ENCODE measurements at regions of chrX and their contacts with region 1.

Region 1: DNA sequence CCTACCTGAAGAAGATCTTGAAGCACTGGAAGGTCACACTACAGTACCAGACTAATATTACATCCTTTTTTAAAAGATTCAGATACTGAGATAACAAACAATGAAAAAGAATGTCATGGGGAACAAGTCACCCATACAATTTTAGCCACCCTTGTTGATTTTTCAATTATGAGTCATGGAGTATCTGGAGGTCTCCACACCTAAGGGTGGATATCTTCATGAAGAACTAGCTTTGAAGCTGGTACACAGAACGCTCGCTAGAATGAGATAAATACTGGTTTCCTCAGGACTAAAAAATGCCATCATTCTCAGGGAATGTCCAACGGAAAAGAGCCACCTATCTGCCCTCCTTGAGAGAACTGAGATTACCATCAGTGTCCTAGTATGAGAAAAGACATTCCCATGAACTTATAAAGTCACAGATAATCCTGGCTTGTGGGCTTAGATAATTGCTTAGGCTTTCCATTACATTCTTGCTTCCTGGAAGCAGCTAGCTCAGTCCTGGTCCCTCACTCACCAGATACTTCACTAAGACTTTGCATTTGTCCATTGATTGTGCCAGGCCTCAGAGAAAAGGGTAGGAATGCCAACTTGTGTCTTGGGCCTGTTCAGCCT is 166.7 kb downstream of the OR13H1 start:
- DNase-seq: no peak
- H3K4me3 Mint-ChIP-seq: peak overlapping the region; percentile 67
- H3K27ac Mint-ChIP-seq: peak overlapping the region; percentile 49
- H3K4me1 Mint-ChIP-seq: peaks cover 8% of the 10 kb centered on the region
- H3K27me3 Mint-ChIP-seq: peaks cover 26% of the 10 kb centered on the region
- CTCF ChIP-seq: no peak

Region 2: DNA sequence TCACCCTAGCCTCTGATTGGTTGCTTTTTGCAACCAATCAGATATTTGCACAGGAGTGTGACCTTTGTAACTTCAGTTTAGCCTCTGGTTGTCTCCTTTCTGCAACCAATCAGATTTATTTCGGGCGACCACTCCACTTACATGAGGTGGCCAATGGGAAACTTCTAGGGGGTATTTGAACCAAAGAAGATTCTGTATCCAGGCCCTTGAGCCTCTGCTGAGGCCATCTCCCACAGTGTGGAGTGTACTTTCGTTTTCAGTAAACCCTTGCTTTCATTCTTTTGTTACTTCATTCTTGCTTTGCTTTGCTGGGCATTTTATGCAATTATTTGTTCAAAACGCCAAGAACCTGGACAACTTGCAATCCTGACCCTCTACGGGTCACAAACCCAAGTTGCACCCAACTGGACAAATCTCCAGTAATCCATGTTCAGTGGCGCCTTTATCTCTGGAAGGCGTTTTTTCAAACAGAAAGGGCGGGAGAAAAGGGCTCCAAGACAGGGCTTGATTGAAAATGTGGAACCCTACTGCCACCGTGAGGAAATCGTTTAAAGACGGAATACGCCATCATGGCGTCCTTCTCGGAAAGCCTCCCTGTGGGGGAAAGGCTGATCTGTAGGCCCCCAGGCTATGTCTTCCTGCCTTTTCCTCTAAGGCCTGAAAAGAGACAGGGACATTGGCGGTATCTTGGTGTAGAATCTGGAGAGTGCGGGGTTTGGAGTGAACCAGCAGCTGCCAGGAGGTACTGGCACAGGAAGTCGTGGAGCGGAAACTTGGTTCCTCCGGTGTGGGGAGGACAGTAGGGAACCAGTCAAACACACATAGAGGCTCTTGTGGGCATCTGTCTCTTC is 18.0 kb after region 1 on chrX:
- CTCF ChIA-PET with region 1: no interaction called
- POLR2A ChIA-PET with region 1: interaction called, 4 read pairs
- intact Hi-C with region 1: loop called (anchors 1 kb)
- DNase-seq: peak; percentile 93
- H3K4me3 Mint-ChIP-seq: peak overlapping the region; percentile 85
- H3K27ac Mint-ChIP-seq: peak overlapping the region; percentile 98
- H3K4me1 Mint-ChIP-seq: no peaks in the 10 kb centered on the region
- H3K27me3 Mint-ChIP-seq: no peaks in the 10 kb centered on the region
- CTCF ChIP-seq: peak; percentile 52

Region 3: GRCh38 chrX:131746474-131746968 is 36.0 kb after region 1 on chrX:
- CTCF ChIA-PET with region 1: interaction called, 22 read pairs
- POLR2A ChIA-PET with region 1: interaction called, 16 read pairs
- intact Hi-C with region 1: loop called (anchors 1 kb)
- DNase-seq: peak; percentile 95
- H3K4me3 Mint-ChIP-seq: peak overlapping the region; percentile 93
- H3K27ac Mint-ChIP-seq: peak overlapping the region; percentile 94
- H3K4me1 Mint-ChIP-seq: peaks cover 13% of the 10 kb centered on the region
- H3K27me3 Mint-ChIP-seq: no peaks in the 10 kb centered on the region
- CTCF ChIP-seq: peak; percentile 62

Region 4: GRCh38 chrX:131792789-131793462 is 82.4 kb after region 1 on chrX:
- CTCF ChIA-PET with region 1: interaction called, 6 read pairs
- POLR2A ChIA-PET with region 1: interaction called, 4 read pairs
- intact Hi-C with region 1: loop called (anchors 1 kb)
- DNase-seq: peak; percentile 94
- H3K4me3 Mint-ChIP-seq: peak overlapping the region; percentile 72
- H3K27ac Mint-ChIP-seq: peak overlapping the region; percentile 80
- H3K4me1 Mint-ChIP-seq: peaks cover 4% of the 10 kb centered on the region
- H3K27me3 Mint-ChIP-seq: peaks cover 37% of the 10 kb centered on the region
- CTCF ChIP-seq: peak; percentile 49

Region 5: DNA sequence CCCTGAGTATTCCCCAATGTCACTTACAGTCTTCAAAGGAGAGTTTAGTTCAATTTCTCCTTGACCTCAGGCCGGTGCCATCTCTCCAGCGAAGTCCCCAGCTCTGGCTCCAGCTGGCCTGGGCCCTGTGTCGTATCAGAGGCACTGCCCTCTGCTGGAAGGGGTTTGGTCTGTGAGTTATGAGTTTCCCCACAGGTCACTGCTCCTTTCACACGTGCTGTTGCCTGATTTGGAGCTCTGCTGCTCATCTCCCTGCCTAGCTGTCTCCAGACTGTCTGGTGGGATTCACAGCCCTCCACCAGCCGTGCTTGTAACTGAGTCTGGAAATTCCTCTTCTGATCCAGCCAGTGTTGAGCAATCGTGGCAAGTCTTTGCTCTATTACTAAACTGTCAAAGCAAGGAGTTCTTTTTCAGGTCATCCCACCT is 508.8 kb after region 1 on chrX and contains the start of gene RAP2C:
- CTCF ChIA-PET with region 1: no interaction called
- POLR2A ChIA-PET with region 1: no interaction called
- intact Hi-C with region 1: loop called (anchors 1 kb)
- DNase-seq: peak; percentile 78
- H3K4me3 Mint-ChIP-seq: peak within 1 kb of the TSS; percentile 80
- H3K27ac Mint-ChIP-seq: peak within 1 kb of the TSS; percentile 72
- H3K4me1 Mint-ChIP-seq: peaks cover 7% of the 10 kb centered on the region
- H3K27me3 Mint-ChIP-seq: peaks cover 66% of the 10 kb centered on the region
- CTCF ChIP-seq: peak; percentile 48
- total RNA-seq, gene RAP2C: 36.3 and 37.0 TPM in 2 replicates

Region 6: DNA sequence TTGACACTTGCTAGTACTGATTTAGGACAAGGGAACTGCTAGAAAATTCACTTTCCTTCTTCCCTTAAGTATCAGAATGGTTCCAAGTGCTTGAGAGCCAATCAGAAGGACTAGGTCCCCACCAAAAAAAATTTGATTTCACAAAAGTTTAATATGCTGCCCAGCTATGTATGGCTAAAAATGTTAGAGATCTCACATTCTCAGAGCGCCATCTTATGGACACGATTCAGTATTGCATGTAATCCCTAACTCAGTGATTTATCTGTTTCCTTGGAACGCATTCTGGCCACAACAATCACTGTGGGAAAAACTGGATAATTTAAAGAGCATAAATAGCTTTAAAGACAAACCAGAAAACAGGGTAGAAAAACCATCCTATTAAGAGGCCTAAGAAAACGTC is 1959.8 kb after region 1 on chrX:
- CTCF ChIA-PET with region 1: no interaction called
- POLR2A ChIA-PET with region 1: no interaction called
- intact Hi-C with region 1: loop called (anchors 5 kb)
- DNase-seq: peak; percentile 57
- H3K4me3 Mint-ChIP-seq: no peak overlapping the region
- H3K27ac Mint-ChIP-seq: no peak overlapping the region
- H3K4me1 Mint-ChIP-seq: no peaks in the 10 kb centered on the region
- H3K27me3 Mint-ChIP-seq: peaks cover 48% of the 10 kb centered on the region
- CTCF ChIP-seq: peak; percentile 79

Measured in MCF 10A (cell line).